ENCODE measurements at regions of chr2 and their contacts with region 1.

Region 1: DNA sequence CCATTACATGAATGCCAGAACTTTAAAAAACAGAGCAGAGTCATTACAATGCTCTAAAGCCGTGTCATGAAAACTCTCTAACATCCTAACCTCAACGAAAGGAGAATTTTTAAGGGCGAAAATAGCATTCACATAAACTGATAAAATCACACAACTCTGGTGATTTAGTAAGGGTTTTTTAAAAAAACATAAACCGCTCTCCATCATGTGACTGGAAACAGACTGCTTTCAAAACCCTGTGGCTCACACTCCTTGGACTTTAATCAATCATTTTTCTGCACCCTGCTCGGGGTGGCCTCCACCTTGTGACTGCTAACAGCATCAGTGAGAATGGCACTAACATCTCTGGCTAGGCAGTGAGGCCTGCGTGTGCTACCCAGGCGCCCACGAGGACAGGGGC is 12.1 kb downstream of the DOCK10 start:
- DNase-seq: peak in 7 of 35 experiments; percentile 3 to 27 (median 13)
- ATAC-seq: peak; percentile 28 to 46 (median 34)
- H3K4me3 ChIP-seq: no peak overlapping the region
- H3K4me3 Mint-ChIP-seq: peak overlapping the region; percentile 34 to 50 (median 41)
- H3K27ac ChIP-seq: no peak overlapping the region
- H3K27ac Mint-ChIP-seq: peak overlapping the region; percentile 79 to 80
- H3K4me1 ChIP-seq: peaks cover 47 to 51% of the 10 kb centered on the region in 2 experiments
- H3K4me1 Mint-ChIP-seq: peaks cover 81 to 86% (median 86%) of the 10 kb centered on the region in 3 donors
- H3K27me3 ChIP-seq: no peaks in the 10 kb centered on the region
- H3K27me3 Mint-ChIP-seq: no peaks in the 10 kb centered on the region

Region 2: DNA sequence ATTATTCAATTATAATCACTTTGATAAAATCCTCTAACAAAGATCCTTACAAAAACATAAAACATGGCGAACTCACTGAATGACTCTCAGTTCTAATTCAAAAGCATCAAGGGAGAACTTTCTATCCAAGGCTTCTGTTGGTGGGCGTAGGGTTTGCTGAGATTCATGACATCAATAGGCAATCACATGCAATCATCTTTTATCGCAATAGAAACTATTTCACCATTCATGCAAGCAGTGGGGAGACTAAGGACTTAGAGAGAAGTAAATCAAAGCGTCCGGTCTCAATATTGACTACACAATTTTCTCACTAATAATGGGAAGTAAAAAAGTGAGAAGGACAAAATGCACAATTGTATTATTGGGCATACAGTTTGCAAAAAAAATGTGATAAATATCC is 1596.7 kb before region 1 on chr2:
- CTCF ChIA-PET with region 1: no interaction called
- POLR2A ChIA-PET with region 1: no interaction called
- DNase-seq: no peak
- ATAC-seq: no peak
- H3K4me3 ChIP-seq: no peak overlapping the region
- H3K4me3 Mint-ChIP-seq: no peak overlapping the region
- H3K27ac ChIP-seq: no peak overlapping the region
- H3K27ac Mint-ChIP-seq: no peak overlapping the region
- H3K4me1 ChIP-seq: no peaks in the 10 kb centered on the region
- H3K4me1 Mint-ChIP-seq: no peaks in the 10 kb centered on the region
- H3K27me3 ChIP-seq: no peaks in the 10 kb centered on the region
- H3K27me3 Mint-ChIP-seq: no peaks in the 10 kb centered on the region

Region 3: GRCh38 chr2:224802407-224802806 is 227.8 kb before region 1 on chr2:
- CTCF ChIA-PET with region 1: no interaction called
- POLR2A ChIA-PET with region 1: no interaction called
- DNase-seq: no peak
- ATAC-seq: no peak
- H3K4me3 ChIP-seq: no peak overlapping the region
- H3K4me3 Mint-ChIP-seq: no peak overlapping the region
- H3K27ac ChIP-seq: no peak overlapping the region
- H3K27ac Mint-ChIP-seq: peak overlapping the region; percentile 22 to 31
- H3K4me1 ChIP-seq: no peaks in the 10 kb centered on the region
- H3K4me1 Mint-ChIP-seq: no peaks in the 10 kb centered on the region
- H3K27me3 ChIP-seq: no peaks in the 10 kb centered on the region
- H3K27me3 Mint-ChIP-seq: no peaks in the 10 kb centered on the region

Region 4: DNA sequence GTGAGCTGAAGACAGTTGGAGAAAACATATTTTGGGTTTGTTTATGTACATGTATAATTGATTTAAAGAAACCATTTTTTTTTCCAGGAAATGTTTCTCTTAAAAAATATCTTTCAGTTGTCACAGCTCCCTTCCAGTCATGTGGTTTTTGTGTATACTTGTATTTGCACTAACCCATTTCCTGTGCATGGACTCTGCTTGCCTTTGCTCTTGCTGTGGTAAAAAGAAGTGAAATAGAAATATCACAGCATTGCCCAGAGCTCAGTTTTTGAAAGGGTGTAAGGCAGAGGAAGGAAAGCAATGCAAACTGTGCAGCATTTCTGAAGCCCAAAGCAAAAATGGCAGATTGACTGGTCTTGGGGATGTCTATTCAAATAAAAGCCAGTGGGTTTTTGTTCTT is 22.5 kb after region 1 on chr2:
- CTCF ChIA-PET with region 1: interaction called in 1 of 2 experiments, 10 read pairs
- POLR2A ChIA-PET with region 1: interaction called in 1 of 2 experiments, 3 read pairs
- DNase-seq: peak in 24 of 35 experiments; percentile 6 to 69 (median 26)
- ATAC-seq: peak; percentile 88 to 96 (median 92)
- H3K4me3 ChIP-seq: no peak overlapping the region
- H3K4me3 Mint-ChIP-seq: peak overlapping the region in 2 of 3 donors; percentile 21 to 27
- H3K27ac ChIP-seq: peak overlapping the region; percentile 50
- H3K27ac Mint-ChIP-seq: peak overlapping the region; percentile 86 to 88
- H3K4me1 ChIP-seq: peaks cover 33 to 47% of the 10 kb centered on the region in 2 experiments
- H3K4me1 Mint-ChIP-seq: peaks cover 64 to 72% (median 70%) of the 10 kb centered on the region in 3 donors
- H3K27me3 ChIP-seq: no peaks in the 10 kb centered on the region
- H3K27me3 Mint-ChIP-seq: no peaks in the 10 kb centered on the region

Region 5: DNA sequence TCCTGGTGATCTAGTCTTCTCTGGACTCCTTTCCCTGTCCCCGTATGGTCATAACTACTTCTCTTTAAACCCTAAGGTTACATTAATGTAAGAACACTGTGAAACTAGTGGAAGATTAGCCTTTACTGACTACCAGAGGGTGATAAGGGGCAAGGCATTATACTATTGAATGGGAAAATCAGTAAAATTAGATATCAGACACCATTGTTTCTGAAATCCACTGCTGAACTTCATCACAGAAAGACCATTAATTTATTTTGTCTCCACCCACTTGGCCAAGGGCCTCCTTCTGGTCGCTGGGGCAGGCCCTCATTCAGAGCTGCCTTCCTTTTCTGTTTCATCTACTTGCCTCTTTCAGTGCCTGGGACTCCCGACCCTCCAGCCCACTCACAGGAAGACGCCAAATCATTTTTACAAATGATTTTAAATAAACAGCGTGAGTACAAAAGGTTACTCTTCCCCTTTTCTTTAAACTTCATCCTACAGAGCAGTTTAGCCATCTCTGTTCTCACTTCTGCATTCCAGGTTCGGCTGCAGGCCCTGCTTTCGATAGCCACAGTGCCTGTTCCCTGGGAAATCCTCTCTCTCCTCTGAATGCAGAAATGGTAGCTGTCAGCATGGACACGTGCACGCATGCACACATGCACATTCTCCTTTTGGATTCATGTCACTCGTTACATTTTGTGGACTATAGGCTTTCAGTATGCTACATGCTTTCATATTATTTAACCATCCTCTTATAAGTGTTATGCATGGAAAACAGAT is 82.3 kb after region 1 on chr2:
- CTCF ChIA-PET with region 1: no interaction called
- POLR2A ChIA-PET with region 1: no interaction called
- DNase-seq: peak in 1 of 35 experiments; percentile 8
- ATAC-seq: no peak
- H3K4me3 ChIP-seq: no peak overlapping the region
- H3K4me3 Mint-ChIP-seq: no peak overlapping the region
- H3K27ac ChIP-seq: no peak overlapping the region
- H3K27ac Mint-ChIP-seq: no peak overlapping the region
- H3K4me1 ChIP-seq: no peaks in the 10 kb centered on the region
- H3K4me1 Mint-ChIP-seq: peaks cover 12 to 16% (median 15%) of the 10 kb centered on the region in 3 donors
- H3K27me3 ChIP-seq: no peaks in the 10 kb centered on the region
- H3K27me3 Mint-ChIP-seq: no peaks in the 10 kb centered on the region

Measured in T-cell (primary cell).